Aorta (tissue), 5 donors: ENCODE measurements at regions of chr19 and their contacts with region 1.

Region 1: DNA sequence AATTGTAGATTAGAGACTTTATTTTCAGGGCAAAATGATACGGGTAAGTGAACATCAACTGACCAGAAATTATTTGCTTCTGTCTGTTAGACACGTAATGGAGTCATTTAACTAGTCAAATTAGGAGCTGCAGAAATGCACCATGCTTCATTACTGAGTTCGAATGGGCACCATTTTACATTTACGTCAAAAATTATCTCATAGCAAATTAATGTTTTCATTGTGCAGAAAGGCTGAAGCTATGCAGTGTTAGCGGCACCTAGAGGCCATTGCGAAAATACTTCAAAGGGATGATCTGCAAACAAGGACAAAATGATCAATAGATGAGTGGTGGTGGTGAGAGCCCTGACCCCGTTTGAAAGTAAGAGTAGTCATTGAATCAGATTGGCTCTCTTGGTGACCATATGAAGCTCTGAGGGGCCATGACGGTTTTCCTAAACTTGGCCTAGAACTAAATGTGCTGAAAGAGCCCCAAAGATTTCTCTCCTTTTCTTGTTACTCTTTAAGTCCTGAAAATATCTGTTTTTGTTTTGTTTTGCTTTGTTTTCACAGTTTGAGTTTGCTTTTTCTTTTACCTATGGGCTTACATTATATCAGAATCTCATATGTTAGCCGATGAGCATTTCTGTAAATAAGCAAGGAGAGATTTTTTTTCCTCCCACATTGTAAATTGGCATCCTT is 277.9 kb downstream of the ZNF536 start:
- DNase-seq: peak in 1 of 2 donors; percentile 24
- ATAC-seq: no peak
- H3K4me3 ChIP-seq: no peak overlapping the region
- H3K27ac ChIP-seq: no peak overlapping the region
- H3K4me1 ChIP-seq: no peaks in the 10 kb centered on the region
- H3K27me3 ChIP-seq: no peaks in the 10 kb centered on the region

Region 2: DNA sequence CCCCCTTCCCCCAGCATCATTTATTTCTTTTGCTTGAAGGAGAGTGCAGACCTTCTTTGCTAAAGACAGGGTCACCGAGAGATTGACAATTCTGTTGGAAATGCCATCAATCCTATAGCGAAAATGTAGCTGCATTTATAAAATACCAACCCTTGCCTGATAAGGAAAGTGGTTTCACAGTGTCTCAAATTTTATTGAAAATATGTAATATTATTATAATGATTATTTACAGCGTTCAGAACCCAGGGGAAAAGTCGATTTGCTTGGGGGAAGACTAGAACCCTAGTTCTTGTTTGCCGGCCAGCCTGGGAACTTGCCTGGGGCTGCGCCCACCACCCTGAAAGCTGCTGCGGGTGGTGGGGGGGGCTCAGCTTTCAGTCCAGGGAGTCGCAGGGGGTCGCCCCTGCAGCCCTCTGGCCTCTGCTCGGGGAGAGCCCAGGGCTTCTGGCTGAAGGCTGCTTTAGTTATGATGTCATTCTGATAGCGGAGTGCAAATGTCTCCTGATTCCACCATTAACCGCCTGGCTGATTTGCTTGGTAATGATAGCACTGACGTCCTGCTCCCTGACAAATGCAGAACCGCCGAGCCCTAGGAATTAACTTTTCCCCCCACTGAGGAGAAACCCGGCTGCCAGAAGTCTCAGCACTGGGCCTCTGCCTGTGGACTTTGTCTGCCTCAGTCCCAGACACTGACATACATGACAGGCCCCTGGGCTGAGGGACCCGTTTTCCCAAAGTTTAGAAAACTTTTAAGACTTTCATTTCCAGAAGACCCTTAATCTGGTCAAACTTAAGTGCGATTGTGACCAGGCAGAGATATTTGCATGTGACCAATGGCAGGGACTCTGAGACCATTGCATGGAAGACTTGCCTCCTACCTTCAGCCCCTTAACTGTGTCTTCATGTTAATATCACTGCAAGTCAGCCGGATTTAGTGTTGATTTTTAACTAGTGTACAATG is 420.6 kb before region 1 on chr19:
- intact Hi-C with region 1: loop called in 1 of 2 experiments (anchors 10 kb)
- DNase-seq: no peak
- ATAC-seq: no peak
- H3K4me3 ChIP-seq: peak overlapping the region in 1 of 2 donors; percentile 8
- H3K27ac ChIP-seq: no peak overlapping the region
- H3K4me1 ChIP-seq: no peaks in the 10 kb centered on the region
- H3K27me3 ChIP-seq: no peaks in the 10 kb centered on the region

Region 3: GRCh38 chr19:30630289-30631079 is 19.6 kb before region 1 on chr19:
- intact Hi-C with region 1: no loop called
- DNase-seq: no peak
- ATAC-seq: no peak
- H3K4me3 ChIP-seq: no peak overlapping the region
- H3K27ac ChIP-seq: no peak overlapping the region
- H3K4me1 ChIP-seq: no peaks in the 10 kb centered on the region
- H3K27me3 ChIP-seq: no peaks in the 10 kb centered on the region

Region 4: GRCh38 chr19:30696514-30696913 is 46.4 kb after region 1 on chr19:
- intact Hi-C with region 1: no loop called
- DNase-seq: no peak
- ATAC-seq: no peak
- H3K4me3 ChIP-seq: no peak overlapping the region
- H3K27ac ChIP-seq: no peak overlapping the region
- H3K4me1 ChIP-seq: no peaks in the 10 kb centered on the region
- H3K27me3 ChIP-seq: no peaks in the 10 kb centered on the region